ENCODE measurements at regions of chr17 and their contacts with region 1.

Region 1: GRCh38 chr17:75749545-75750389 is 15.2 kb downstream of the GALK1 start:
- DNase-seq: peak; percentile 91
- ATAC-seq: peak; percentile 76
- H3K4me3 ChIP-seq: no peak overlapping the region
- H3K4me3 Mint-ChIP-seq: peak overlapping the region; percentile 35
- H3K27ac ChIP-seq: no peak overlapping the region
- H3K27ac Mint-ChIP-seq: peak overlapping the region; percentile 64
- H3K4me1 ChIP-seq: peaks cover 9 to 34% of the 10 kb centered on the region in 2 donors
- H3K4me1 Mint-ChIP-seq: peaks cover 21% of the 10 kb centered on the region
- H3K27me3 ChIP-seq: no peaks in the 10 kb centered on the region
- H3K27me3 Mint-ChIP-seq: peaks cover 4% of the 10 kb centered on the region
- CTCF ChIP-seq: peak; percentile 86

Region 2: DNA sequence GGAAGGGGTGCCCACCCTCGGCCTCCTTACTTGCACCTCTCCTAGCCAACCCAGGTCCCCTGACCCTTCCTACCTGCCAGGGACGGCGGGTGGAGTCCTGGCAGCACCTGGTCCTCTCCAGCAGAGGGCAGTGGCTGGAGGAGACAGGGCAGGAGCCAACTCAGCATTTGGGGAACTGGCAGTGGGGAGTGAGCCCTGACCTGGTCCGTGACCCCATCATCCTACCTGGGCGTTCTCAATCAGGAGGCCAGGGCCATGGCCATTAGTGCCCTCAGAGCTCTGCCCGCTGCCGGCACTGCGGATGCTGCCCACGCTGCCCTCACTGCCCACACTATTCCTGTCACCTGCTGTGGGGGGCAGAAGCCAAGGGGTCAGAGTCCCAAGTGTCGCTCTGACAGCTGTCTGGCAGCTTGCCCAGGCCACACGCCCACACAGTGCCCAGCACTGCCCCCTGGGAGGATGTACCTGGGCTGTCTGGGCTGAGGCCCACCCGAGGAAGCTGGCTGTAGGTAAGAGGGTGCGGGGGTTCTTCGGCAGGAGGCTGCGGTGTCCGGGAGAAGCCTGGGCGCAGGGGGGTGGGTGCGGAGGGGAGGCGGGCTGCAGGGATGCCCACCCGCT is 245.3 kb before region 1 on chr17:
- CTCF ChIA-PET with region 1: interaction called, 10 read pairs
- POLR2A ChIA-PET with region 1: no interaction called
- intact Hi-C with region 1: no loop called
- DNase-seq: peak; percentile 73
- ATAC-seq: peak; percentile 90
- H3K4me3 ChIP-seq: no peak overlapping the region
- H3K4me3 Mint-ChIP-seq: no peak overlapping the region
- H3K27ac ChIP-seq: no peak overlapping the region
- H3K27ac Mint-ChIP-seq: no peak overlapping the region
- H3K4me1 ChIP-seq: peaks cover 0 to 7% of the 10 kb centered on the region in 2 donors
- H3K4me1 Mint-ChIP-seq: no peaks in the 10 kb centered on the region
- H3K27me3 ChIP-seq: no peaks in the 10 kb centered on the region
- H3K27me3 Mint-ChIP-seq: no peaks in the 10 kb centered on the region
- CTCF ChIP-seq: peak; percentile 67

Region 3: DNA sequence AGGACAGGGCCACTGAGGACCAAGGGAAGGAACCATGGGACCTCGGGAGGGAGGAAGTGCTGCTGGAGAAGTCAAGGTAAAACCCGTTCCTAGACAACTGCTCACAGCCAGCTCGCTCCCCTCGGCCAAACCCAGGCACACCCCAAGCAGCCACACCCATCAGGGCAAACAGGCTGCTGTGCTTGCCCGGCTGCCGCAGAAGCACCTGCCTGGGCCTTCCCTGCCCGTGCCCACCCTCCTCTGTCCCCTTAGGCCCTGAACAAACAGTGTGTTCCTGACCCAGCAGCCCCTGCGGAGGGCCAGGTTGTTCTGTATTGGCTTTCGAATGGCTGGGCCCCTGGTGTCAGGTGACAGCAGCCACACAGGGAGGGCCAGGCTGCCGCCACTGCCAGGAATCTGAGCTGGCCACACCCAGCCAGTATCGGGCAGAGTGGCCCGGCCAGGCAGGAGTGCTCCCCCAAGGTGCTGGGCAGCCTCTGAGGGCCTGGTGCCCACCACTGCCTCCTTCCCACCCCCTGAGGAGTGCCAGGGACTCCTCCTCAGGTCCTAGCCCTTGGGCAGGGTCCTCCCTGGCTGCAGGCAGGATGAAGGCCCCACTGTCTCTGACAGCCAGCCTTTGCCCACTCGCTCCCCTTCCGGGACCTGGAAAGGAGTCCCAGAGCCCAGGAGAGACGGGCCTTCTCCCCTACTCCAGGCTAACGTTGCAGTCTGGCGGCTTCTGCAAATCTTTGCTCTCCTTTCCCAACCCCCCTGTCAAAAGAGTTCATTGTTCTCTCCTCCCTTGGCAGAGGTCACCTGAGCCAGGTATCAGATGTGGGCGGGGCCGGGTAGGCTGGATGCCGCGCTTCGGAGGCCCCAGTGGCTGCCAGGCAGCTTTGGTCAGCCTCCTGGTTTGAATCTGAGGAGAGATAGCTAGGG is 200.3 kb before region 1 on chr17:
- CTCF ChIA-PET with region 1: no interaction called
- POLR2A ChIA-PET with region 1: no interaction called
- intact Hi-C with region 1: no loop called
- DNase-seq: no peak
- ATAC-seq: no peak
- H3K4me3 ChIP-seq: no peak overlapping the region
- H3K4me3 Mint-ChIP-seq: no peak overlapping the region
- H3K27ac ChIP-seq: no peak overlapping the region
- H3K27ac Mint-ChIP-seq: peak overlapping the region; percentile 32
- H3K4me1 ChIP-seq: no peaks in the 10 kb centered on the region
- H3K4me1 Mint-ChIP-seq: peaks cover 3% of the 10 kb centered on the region
- H3K27me3 ChIP-seq: no peaks in the 10 kb centered on the region
- H3K27me3 Mint-ChIP-seq: no peaks in the 10 kb centered on the region
- CTCF ChIP-seq: no peak

Region 4: DNA sequence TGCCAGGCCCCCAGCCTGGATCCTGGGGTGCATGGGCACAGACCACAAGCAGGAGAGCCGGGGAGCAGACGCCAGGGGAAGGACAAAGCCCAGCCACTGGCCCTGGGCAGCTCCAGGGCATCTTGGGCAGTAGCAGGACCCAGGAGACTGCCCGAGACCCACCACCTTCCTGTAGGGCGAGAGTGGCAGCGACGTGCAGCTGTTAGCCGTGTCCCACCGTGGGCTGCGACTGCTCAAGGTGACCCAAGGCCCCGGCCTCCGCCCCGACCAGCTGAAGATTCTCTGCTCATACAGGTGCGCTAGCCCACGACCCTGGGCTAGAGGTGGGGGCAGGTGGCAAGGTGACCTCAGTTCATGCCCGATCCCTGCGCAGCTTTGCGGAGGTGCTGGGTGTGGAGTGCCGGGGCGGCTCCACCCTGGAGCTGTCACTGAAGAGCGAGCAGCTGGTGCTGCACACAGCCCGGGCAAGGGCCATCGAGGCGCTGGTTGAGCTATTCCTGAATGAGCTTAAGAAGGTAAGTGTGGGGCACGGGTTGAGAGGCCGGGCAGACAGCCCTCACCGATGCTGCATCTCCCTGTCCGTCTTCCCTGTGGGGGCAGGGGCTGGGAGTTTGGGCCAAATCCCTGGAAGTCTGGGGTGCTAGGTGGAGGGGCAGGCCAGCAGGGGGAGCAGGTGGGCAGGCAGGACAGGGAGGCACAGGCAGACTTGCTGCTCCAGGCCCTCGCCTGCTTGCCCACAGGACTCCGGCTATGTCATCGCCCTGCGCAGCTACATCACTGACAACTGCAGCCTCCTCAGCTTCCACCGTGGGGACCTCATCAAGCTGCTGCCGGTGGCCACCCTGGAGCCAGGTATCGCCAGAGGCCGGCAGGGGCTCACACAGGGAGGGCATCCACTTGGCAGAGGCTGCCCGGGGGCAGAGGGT is 130.0 kb before region 1 on chr17:
- CTCF ChIA-PET with region 1: interaction called, 389 read pairs
- POLR2A ChIA-PET with region 1: no interaction called
- intact Hi-C with region 1: no loop called
- DNase-seq: no peak
- ATAC-seq: no peak
- H3K4me3 ChIP-seq: no peak overlapping the region
- H3K4me3 Mint-ChIP-seq: no peak overlapping the region
- H3K27ac ChIP-seq: no peak overlapping the region
- H3K27ac Mint-ChIP-seq: no peak overlapping the region
- H3K4me1 ChIP-seq: no peaks in the 10 kb centered on the region
- H3K4me1 Mint-ChIP-seq: no peaks in the 10 kb centered on the region
- H3K27me3 ChIP-seq: no peaks in the 10 kb centered on the region
- H3K27me3 Mint-ChIP-seq: no peaks in the 10 kb centered on the region
- CTCF ChIP-seq: peak; percentile 29

Region 5: DNA sequence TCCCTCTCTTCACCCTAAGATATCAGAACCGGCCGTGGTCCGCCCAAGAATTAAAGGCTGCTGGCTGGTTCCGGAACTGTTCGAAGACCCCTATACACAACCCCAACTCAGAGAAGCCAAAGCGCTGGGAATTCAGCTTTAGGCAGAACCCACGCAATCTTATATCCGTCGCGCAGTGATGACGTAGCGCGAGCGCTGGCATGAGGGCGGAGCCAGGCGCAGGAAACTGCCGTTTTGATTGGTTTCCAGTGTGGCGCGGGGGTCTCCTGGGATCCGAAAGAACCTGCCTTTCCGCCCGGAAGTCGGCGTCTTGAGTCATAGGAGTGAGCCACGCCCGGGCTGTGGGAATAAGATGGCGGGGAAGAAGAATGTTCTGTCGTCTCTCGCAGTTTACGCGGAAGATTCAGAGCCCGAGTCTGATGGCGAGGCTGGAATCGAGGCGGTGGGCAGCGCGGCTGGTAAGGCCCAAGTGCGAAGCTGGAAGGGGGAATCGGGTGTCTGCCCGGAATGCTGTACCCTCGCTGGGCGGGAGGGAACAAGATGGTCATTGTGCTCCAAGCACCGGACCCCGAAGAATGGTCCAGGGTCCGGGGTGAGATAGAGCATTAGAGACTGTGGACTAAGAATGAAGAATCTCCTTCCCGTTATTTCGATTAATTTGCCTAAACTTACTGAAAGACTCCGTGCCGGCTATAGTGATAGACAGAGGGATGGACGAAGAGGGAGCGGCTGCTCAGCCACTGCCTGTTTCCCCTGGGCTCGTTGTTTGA is 82.6 kb before region 1 on chr17 and contains the starts of genes RECQL5 and SAP30BP:
- CTCF ChIA-PET with region 1: interaction called, 144 read pairs
- POLR2A ChIA-PET with region 1: no interaction called
- intact Hi-C with region 1: no loop called
- DNase-seq: peak; percentile 99
- ATAC-seq: peak; percentile 85
- H3K4me3 ChIP-seq: peak within 1 kb of the TSS; percentile 84 to 99 (median 98)
- H3K4me3 Mint-ChIP-seq: peak within 1 kb of the TSS; percentile 50
- H3K27ac ChIP-seq: peak within 1 kb of the TSS; percentile 84 to 89
- H3K27ac Mint-ChIP-seq: peak within 1 kb of the TSS; percentile 78
- H3K4me1 ChIP-seq: peaks cover 40 to 46% of the 10 kb centered on the region in 2 donors
- H3K4me1 Mint-ChIP-seq: peaks cover 34% of the 10 kb centered on the region
- H3K27me3 ChIP-seq: no peaks in the 10 kb centered on the region
- H3K27me3 Mint-ChIP-seq: no peaks in the 10 kb centered on the region
- CTCF ChIP-seq: no peak
- total RNA-seq, gene RECQL5: 56.6 and 58.5 TPM in 2 replicates
- total RNA-seq, gene SAP30BP: 148 and 174 TPM in 2 replicates

Region 6: DNA sequence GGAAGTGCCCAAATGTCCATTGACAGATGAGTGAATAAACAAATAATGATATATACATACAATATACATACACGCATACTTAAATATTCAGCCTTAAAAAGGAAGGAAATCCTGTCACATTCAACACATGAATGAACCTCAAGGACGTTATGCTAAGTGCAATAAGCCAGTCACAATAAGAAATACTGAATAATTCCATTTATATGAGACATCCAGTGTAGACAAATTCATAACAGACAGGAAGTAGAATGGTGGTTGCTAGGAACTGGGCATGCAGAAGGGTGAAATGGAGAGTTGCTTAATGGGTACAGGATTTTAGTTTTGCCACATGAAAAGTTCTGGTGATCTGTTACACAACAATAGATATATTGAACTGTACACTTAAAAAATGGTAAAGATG is 37.3 kb before region 1 on chr17:
- CTCF ChIA-PET with region 1: no interaction called
- POLR2A ChIA-PET with region 1: no interaction called
- intact Hi-C with region 1: no loop called
- DNase-seq: no peak
- ATAC-seq: no peak
- H3K4me3 ChIP-seq: no peak overlapping the region
- H3K4me3 Mint-ChIP-seq: no peak overlapping the region
- H3K27ac ChIP-seq: no peak overlapping the region
- H3K27ac Mint-ChIP-seq: no peak overlapping the region
- H3K4me1 ChIP-seq: no peaks in the 10 kb centered on the region
- H3K4me1 Mint-ChIP-seq: peaks cover 2% of the 10 kb centered on the region
- H3K27me3 ChIP-seq: no peaks in the 10 kb centered on the region
- H3K27me3 Mint-ChIP-seq: peaks cover 3% of the 10 kb centered on the region
- CTCF ChIP-seq: no peak

Region 7: DNA sequence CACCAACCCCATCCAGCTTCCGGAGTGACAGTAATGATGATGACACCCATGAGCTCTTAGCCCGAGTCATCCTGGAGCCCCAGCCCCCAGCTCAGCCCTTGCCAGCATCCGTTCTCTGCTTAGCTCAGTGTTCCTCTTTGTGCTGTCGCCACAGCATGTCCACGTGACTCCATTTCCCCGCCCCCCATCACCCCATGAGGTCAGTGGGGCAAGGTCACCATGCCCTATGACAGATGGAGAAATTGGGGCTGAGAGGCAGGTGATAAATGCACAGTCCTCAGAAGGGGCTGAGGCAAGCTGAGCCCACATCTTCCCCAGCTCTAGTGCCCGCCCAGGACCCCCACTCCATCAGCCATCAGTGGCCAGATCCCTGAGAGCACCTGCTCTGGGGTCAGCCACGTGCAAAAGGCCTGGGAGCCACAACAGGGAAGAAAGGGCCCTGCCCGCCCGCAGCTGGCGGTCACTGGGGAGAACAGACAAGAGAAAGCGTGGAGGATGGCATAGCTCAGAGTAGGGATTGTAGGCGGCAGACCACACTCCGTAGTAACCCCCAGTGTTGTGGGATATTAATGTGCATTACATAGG is 11.5 kb before region 1 on chr17:
- CTCF ChIA-PET with region 1: interaction called, 29 read pairs
- POLR2A ChIA-PET with region 1: no interaction called
- intact Hi-C with region 1: no loop called
- DNase-seq: no peak
- ATAC-seq: peak; percentile 24
- H3K4me3 ChIP-seq: no peak overlapping the region
- H3K4me3 Mint-ChIP-seq: no peak overlapping the region
- H3K27ac ChIP-seq: no peak overlapping the region
- H3K27ac Mint-ChIP-seq: no peak overlapping the region
- H3K4me1 ChIP-seq: peaks cover 4 to 10% of the 10 kb centered on the region in 2 donors
- H3K4me1 Mint-ChIP-seq: peaks cover 4% of the 10 kb centered on the region
- H3K27me3 ChIP-seq: peaks cover 0 to 4% (median 0%) of the 10 kb centered on the region in 4 experiments
- H3K27me3 Mint-ChIP-seq: no peaks in the 10 kb centered on the region
- CTCF ChIP-seq: no peak

Region 8: GRCh38 chr17:75827252-75828115 is 77.7 kb after region 1 on chr17:
- CTCF ChIA-PET with region 1: interaction called, 83 read pairs
- POLR2A ChIA-PET with region 1: interaction called, 6 read pairs
- intact Hi-C with region 1: loop called (anchors 1 kb)
- DNase-seq: peak; percentile 79
- ATAC-seq: peak; percentile 83
- H3K4me3 ChIP-seq: peak overlapping the region in 4 of 5 experiments; percentile 27 to 47 (median 36)
- H3K4me3 Mint-ChIP-seq: peak overlapping the region; percentile 82
- H3K27ac ChIP-seq: peak overlapping the region; percentile 42 to 54
- H3K27ac Mint-ChIP-seq: peak overlapping the region; percentile 86
- H3K4me1 ChIP-seq: peaks cover 8 to 18% of the 10 kb centered on the region in 2 donors
- H3K4me1 Mint-ChIP-seq: peaks cover 18% of the 10 kb centered on the region
- H3K27me3 ChIP-seq: no peaks in the 10 kb centered on the region
- H3K27me3 Mint-ChIP-seq: no peaks in the 10 kb centered on the region
- CTCF ChIP-seq: peak; percentile 80

Region 9: GRCh38 chr17:75959051-75959838 is 209.5 kb after region 1 on chr17:
- CTCF ChIA-PET with region 1: no interaction called
- POLR2A ChIA-PET with region 1: no interaction called
- intact Hi-C with region 1: no loop called
- DNase-seq: no peak
- ATAC-seq: no peak
- H3K4me3 ChIP-seq: no peak overlapping the region
- H3K4me3 Mint-ChIP-seq: no peak overlapping the region
- H3K27ac ChIP-seq: no peak overlapping the region
- H3K27ac Mint-ChIP-seq: no peak overlapping the region
- H3K4me1 ChIP-seq: peaks cover 0 to 4% of the 10 kb centered on the region in 2 donors
- H3K4me1 Mint-ChIP-seq: peaks cover 3% of the 10 kb centered on the region
- H3K27me3 ChIP-seq: no peaks in the 10 kb centered on the region
- H3K27me3 Mint-ChIP-seq: no peaks in the 10 kb centered on the region
- CTCF ChIP-seq: no peak

Region 10: DNA sequence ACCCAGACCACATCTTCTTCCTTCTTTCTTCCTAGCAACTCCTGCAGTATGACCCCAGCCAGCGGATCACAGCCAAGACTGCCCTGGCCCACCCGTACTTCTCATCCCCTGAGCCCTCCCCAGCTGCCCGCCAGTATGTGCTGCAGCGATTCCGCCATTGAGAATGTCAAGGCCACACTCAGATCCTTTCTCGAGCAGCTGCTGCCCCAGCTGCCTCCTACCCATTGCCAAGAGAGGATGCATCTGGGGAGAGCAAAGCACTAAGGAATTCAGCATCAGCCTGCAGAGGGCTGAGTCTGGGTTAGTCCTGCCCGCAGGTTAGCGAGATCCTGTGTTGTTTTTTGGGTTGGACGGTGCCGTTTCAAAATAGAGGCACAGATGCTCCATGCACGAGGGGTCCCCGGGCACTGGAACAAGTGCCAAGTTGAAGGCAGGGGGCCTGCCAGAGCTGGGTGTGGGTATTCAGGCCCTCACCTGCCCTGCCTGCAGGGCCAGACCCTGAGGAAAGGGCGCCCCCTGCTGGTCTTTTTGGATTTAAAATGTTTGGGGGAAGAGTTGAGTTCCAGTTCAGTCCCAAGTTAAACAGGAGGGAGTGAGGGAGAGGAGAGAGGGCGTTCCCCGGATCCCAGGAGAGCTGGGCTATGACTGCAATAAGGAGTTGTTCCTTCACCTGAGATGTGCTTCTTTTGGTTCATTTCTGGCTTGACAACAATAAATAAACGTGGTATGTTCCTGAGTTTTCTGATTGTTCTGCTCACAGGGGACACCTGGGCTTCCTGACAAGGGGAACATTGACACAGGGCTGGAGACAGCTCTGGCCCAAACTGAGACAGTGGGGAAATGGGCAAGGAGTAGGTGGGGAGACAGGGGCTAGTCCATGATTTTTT is 255.7 kb after region 1 on chr17:
- CTCF ChIA-PET with region 1: interaction called, 11 read pairs
- POLR2A ChIA-PET with region 1: interaction called, 7 read pairs
- intact Hi-C with region 1: loop called (anchors 10 kb)
- DNase-seq: peak; percentile 85
- ATAC-seq: peak; percentile 80
- H3K4me3 ChIP-seq: no peak overlapping the region
- H3K4me3 Mint-ChIP-seq: no peak overlapping the region
- H3K27ac ChIP-seq: no peak overlapping the region
- H3K27ac Mint-ChIP-seq: peak overlapping the region; percentile 56
- H3K4me1 ChIP-seq: peaks cover 0 to 3% of the 10 kb centered on the region in 2 donors
- H3K4me1 Mint-ChIP-seq: no peaks in the 10 kb centered on the region
- H3K27me3 ChIP-seq: no peaks in the 10 kb centered on the region
- H3K27me3 Mint-ChIP-seq: no peaks in the 10 kb centered on the region
- CTCF ChIP-seq: peak; percentile 85

Measured in B cell (primary cell).